Endothelial cell of umbilical vein (primary cell): ENCODE measurements at regions of chr13 and their contacts with region 1.

Region 1: GRCh38 chr13:74133657-74134201 is 475 bp downstream of the KLF12 start:
- DNase-seq: peak; percentile 90
- H3K4me3 ChIP-seq: peak overlapping the region; percentile 74 to 92 (median 91)
- H3K27ac ChIP-seq: peak overlapping the region; percentile 64
- H3K4me1 ChIP-seq: peaks cover 32% of the 10 kb centered on the region
- H3K27me3 ChIP-seq: no peaks in the 10 kb centered on the region
- CTCF ChIP-seq: no peak
- POLR2A ChIP-seq: no peak

Region 2: DNA sequence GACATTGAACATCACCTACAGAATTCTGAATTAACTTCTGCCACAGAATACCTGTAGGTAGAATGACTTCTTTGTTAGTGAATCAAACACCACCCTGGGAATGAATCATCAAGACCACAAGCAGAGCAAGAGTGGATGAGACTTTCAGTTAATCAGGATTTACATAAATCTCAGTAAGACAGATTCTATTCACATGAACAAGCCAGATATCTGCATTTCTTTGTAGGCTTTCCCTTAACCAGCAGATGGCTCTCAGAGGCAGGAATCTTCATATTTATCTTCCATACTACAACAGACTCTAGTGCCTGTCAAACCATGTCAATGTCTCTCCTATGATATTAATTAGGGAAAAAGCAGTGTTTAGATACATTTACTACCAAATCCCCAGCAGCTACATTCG is 411.6 kb before region 1 on chr13:
- CTCF ChIA-PET with region 1: no interaction called
- POLR2A ChIA-PET with region 1: no interaction called
- dilution Hi-C with region 1: no loop called
- intact Hi-C with region 1: no loop called
- DNase-seq: peak; percentile 33
- H3K4me3 ChIP-seq: no peak overlapping the region
- H3K27ac ChIP-seq: no peak overlapping the region
- H3K4me1 ChIP-seq: peaks cover 10% of the 10 kb centered on the region
- H3K27me3 ChIP-seq: no peaks in the 10 kb centered on the region
- CTCF ChIP-seq: no peak
- POLR2A ChIP-seq: no peak

Region 3: DNA sequence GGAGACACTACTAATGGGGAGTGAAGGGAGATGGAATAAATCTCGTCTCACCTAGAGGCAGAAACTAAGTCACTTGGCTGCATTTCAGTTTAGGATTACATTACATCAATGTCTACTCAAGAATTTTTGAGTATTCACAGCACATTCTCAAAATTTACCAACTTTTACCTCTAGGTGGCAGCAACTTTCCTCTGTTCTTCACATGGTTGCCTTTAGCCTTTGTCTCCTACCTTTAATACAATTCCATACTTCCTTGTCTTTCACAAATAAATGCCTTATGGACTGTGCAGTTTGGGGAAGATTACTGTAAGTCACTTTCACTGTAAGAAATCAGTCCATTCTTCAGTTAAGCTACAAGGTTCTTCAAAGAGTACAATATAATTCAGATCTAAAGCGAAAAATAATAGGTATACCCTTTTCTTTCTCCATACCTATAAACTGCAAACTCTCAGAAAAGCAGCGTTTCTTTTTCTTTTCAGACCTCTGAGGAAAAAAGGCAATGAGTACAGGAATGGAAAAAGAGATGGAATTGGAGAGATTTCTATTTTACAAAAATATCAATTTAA is 378.9 kb before region 1 on chr13:
- CTCF ChIA-PET with region 1: no interaction called
- POLR2A ChIA-PET with region 1: no interaction called
- dilution Hi-C with region 1: no loop called
- intact Hi-C with region 1: loop called (anchors 1 kb)
- DNase-seq: peak; percentile 79
- H3K4me3 ChIP-seq: no peak overlapping the region
- H3K27ac ChIP-seq: no peak overlapping the region
- H3K4me1 ChIP-seq: no peaks in the 10 kb centered on the region
- H3K27me3 ChIP-seq: no peaks in the 10 kb centered on the region
- CTCF ChIP-seq: peak; percentile 36 to 51
- POLR2A ChIP-seq: no peak

Region 4: DNA sequence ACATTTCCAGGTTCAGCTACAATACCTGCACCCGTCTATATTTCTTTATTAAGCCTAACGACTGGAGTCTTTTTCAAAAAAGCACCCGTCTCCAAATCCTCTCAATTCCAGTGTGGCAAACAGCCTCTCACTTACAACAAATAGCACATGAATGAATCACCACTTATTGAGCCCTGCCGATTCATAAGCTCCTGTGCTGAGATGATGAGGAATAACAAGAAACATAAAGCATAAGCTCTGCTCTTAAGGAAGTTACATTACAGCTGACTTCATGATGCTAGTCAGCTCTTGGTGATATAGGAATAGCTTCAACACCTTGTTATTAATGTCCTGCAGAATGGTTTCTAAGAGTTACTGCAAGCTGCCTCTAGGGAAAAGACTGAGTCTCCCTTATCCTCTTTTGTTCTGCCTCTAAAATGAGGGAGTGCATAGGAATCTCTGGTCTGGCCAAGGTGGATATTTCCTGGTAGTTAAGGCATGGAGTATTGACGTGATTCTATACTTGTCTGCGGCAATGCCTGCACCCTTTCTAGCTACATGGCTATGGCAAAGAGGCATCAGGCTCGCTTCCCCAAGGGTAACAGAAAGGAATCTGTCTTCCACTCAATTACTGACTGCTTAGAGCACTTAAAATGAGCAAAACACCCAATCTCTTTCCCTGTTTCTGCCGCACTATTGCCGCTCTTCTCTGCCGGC is 195.2 kb before region 1 on chr13:
- CTCF ChIA-PET with region 1: no interaction called
- POLR2A ChIA-PET with region 1: no interaction called
- dilution Hi-C with region 1: no loop called
- intact Hi-C with region 1: loop called (anchors 5 kb)
- DNase-seq: peak; percentile 77
- H3K4me3 ChIP-seq: no peak overlapping the region
- H3K27ac ChIP-seq: peak overlapping the region; percentile 32
- H3K4me1 ChIP-seq: peaks cover 23% of the 10 kb centered on the region
- H3K27me3 ChIP-seq: no peaks in the 10 kb centered on the region
- CTCF ChIP-seq: no peak
- POLR2A ChIP-seq: no peak

Region 5: DNA sequence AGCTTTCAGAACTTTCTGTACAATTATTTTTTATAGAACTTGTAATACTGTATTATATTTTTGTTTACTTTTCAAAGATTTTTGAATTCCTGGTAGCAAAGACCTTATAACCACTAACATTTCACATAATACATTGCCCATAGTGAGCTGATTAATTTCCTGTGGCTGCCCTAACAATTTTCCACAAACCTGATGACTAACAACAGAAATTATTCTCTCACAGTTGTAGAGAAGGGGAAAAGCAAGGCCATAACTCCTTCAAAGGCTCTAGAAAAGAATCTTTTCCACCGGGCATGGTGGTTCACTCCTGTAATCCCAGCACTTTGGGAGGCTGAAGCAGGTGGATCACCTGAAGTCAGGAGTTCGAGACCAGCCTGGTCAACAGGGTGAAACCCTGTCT is 18.6 kb before region 1 on chr13:
- CTCF ChIA-PET with region 1: interaction called, 3 read pairs
- POLR2A ChIA-PET with region 1: no interaction called
- dilution Hi-C with region 1: no loop called
- intact Hi-C with region 1: loop called (anchors 1 kb)
- DNase-seq: peak; percentile 88
- H3K4me3 ChIP-seq: no peak overlapping the region
- H3K27ac ChIP-seq: peak overlapping the region; percentile 71
- H3K4me1 ChIP-seq: peaks cover 55% of the 10 kb centered on the region
- H3K27me3 ChIP-seq: no peaks in the 10 kb centered on the region
- CTCF ChIP-seq: no peak
- POLR2A ChIP-seq: no peak

Region 6: DNA sequence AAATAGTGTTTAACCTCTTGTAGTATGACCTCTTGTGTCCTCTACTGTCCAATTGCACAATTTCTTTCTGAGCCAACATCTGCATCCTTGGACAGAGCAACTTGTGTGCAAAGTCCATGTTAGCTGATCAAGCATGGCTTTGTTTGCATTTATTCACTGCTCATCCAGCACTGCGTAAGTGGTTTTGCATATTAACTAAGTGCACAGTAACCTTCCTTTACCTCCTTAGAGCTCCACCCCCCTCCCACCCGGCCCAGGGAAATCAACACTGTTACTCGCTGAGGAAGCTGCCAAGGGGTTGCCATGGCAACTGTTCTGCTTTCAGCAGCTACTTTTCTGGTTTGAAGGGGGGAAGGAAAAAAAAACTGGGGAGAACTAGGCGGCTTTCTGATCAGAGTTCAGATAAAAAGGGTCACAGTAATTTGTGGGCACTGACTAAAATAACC is 154.0 kb after region 1 on chr13:
- CTCF ChIA-PET with region 1: interaction called, 76 read pairs
- POLR2A ChIA-PET with region 1: no interaction called
- dilution Hi-C with region 1: no loop called
- intact Hi-C with region 1: loop called (anchors 1 kb)
- DNase-seq: peak; percentile 69
- H3K4me3 ChIP-seq: no peak overlapping the region
- H3K27ac ChIP-seq: no peak overlapping the region
- H3K4me1 ChIP-seq: peaks cover 4% of the 10 kb centered on the region
- H3K27me3 ChIP-seq: no peaks in the 10 kb centered on the region
- CTCF ChIP-seq: no peak
- POLR2A ChIP-seq: no peak

Region 7: DNA sequence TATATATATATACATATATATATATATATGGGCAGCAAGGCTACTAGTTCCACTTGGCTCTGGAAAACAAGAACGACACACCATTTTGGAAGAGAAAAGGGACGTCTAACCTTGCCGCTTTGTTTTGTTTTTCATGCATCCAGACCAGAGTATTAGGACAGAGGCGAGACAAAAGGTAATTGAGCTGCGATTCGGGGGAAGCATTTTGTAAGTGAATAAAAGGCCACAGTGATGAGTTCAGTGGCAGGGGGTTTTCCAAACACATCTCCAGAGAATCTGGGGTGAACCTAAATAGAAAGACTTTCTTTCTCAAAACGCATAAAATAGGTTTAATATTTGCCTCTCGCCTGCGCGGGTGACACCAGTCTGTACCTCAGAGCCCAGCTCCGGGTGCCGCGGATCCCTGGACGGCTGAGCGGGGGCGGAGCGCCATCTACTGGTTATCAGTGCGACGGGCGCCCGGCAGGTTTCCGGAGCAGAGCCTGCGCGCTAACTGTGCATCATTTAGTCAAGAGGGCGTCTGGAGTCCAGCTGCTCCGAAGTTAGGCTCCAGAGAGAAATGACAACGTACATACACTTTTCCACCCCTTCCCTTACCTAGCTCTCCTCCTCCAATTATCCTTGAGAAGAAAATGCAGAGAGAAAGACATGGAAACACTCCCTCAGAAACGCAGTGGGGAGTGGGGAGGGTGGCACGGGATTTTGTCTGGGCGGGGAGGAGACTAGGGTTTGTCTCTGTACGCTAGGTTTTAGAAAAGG is 1085.9 kb after region 1 on chr13:
- CTCF ChIA-PET with region 1: interaction called, 9 read pairs
- POLR2A ChIA-PET with region 1: no interaction called
- dilution Hi-C with region 1: no loop called
- intact Hi-C with region 1: loop called (anchors 1 kb)
- DNase-seq: peak; percentile 66
- H3K4me3 ChIP-seq: peak overlapping the region in 2 of 3 experiments; percentile 22 to 30
- H3K27ac ChIP-seq: no peak overlapping the region
- H3K4me1 ChIP-seq: peaks cover 3% of the 10 kb centered on the region
- H3K27me3 ChIP-seq: peaks cover 0 to 4% of the 10 kb centered on the region in 2 experiments
- CTCF ChIP-seq: peak; percentile 96
- POLR2A ChIP-seq: no peak